Heart right ventricle (tissue), 16 donors: ENCODE measurements at regions of chr18 and their contacts with region 1.

Region 1: GRCh38 chr18:23828426-23828825 is 139.2 kb downstream of the LAMA3 start:
- DNase-seq: no peak
- ATAC-seq: peak in 1 of 8 donors; percentile 23
- H3K4me3 ChIP-seq: no peak overlapping the region
- H3K27ac ChIP-seq: no peak overlapping the region
- H3K4me1 ChIP-seq: peaks cover 0 to 31% (median 11%) of the 10 kb centered on the region in 9 donors
- H3K27me3 ChIP-seq: no peaks in the 10 kb centered on the region
- CTCF ChIP-seq: no peak

Region 2: GRCh38 chr18:23776306-23776705 is 52.1 kb before region 1 on chr18:
- intact Hi-C with region 1: no loop called
- DNase-seq: no peak
- ATAC-seq: no peak
- H3K4me3 ChIP-seq: no peak overlapping the region
- H3K27ac ChIP-seq: no peak overlapping the region
- H3K4me1 ChIP-seq: peaks cover 0 to 10% (median 5%) of the 10 kb centered on the region in 9 donors
- H3K27me3 ChIP-seq: no peaks in the 10 kb centered on the region
- CTCF ChIP-seq: no peak

Region 3: GRCh38 chr18:23924813-23925212 is 96.4 kb after region 1 on chr18:
- intact Hi-C with region 1: loop called in 1 of 10 experiments (anchors 10 kb)
- DNase-seq: no peak
- ATAC-seq: peak in 1 of 8 donors; percentile 22
- H3K4me3 ChIP-seq: no peak overlapping the region
- H3K27ac ChIP-seq: no peak overlapping the region
- H3K4me1 ChIP-seq: no peaks in the 10 kb centered on the region
- H3K27me3 ChIP-seq: no peaks in the 10 kb centered on the region
- CTCF ChIP-seq: no peak

Region 4: DNA sequence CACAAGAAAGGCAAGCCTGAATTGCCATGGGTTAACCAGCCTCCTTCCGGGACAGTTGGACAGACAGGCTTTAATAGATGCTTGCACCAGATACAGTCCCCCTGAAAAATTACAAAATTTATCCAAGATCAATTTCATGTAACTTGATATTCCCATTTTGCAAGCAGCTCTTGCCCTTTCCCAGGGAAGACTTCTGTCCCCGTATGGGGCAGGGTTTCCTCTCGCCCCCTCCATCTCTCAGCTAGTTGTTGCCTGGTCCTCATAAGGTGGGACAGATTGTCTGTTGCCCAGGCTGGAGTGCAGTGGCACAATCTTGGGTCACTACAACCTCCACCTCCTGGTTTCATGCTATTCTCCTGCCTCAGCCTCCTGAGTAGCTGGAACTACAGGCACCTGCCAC is 247.3 kb after region 1 on chr18:
- intact Hi-C with region 1: loop called in 1 of 10 experiments (anchors 5 kb)
- DNase-seq: no peak
- ATAC-seq: peak in 1 of 8 donors; percentile 23
- H3K4me3 ChIP-seq: no peak overlapping the region
- H3K27ac ChIP-seq: peak overlapping the region; percentile 4 to 83 (median 72)
- H3K4me1 ChIP-seq: peaks cover 0 to 34% (median 15%) of the 10 kb centered on the region in 9 donors
- H3K27me3 ChIP-seq: no peaks in the 10 kb centered on the region
- CTCF ChIP-seq: no peak